Calu3 (cell line): ENCODE measurements at regions of chr10 and their contacts with region 1.

Region 1: GRCh38 chr10:91604553-91605534 is 28.0 kb downstream of the PPP1R3C start:
- DNase-seq: no peak
- H3K4me3 Mint-ChIP-seq: peak overlapping the region; percentile 46
- H3K27ac Mint-ChIP-seq: peak overlapping the region; percentile 93
- H3K4me1 Mint-ChIP-seq: peaks cover 35% of the 10 kb centered on the region
- H3K27me3 Mint-ChIP-seq: no peaks in the 10 kb centered on the region
- CTCF ChIP-seq: no peak

Region 2: GRCh38 chr10:91556691-91557566 is 47.9 kb before region 1 on chr10:
- CTCF ChIA-PET with region 1: no interaction called
- intact Hi-C with region 1: loop called (anchors 2 kb)
- DNase-seq: peak; percentile 39
- H3K4me3 Mint-ChIP-seq: no peak overlapping the region
- H3K27ac Mint-ChIP-seq: peak overlapping the region; percentile 75
- H3K4me1 Mint-ChIP-seq: peaks cover 56% of the 10 kb centered on the region
- H3K27me3 Mint-ChIP-seq: no peaks in the 10 kb centered on the region
- CTCF ChIP-seq: no peak